ENCODE measurements at regions of chr1 and their contacts with region 1.

Region 1: DNA sequence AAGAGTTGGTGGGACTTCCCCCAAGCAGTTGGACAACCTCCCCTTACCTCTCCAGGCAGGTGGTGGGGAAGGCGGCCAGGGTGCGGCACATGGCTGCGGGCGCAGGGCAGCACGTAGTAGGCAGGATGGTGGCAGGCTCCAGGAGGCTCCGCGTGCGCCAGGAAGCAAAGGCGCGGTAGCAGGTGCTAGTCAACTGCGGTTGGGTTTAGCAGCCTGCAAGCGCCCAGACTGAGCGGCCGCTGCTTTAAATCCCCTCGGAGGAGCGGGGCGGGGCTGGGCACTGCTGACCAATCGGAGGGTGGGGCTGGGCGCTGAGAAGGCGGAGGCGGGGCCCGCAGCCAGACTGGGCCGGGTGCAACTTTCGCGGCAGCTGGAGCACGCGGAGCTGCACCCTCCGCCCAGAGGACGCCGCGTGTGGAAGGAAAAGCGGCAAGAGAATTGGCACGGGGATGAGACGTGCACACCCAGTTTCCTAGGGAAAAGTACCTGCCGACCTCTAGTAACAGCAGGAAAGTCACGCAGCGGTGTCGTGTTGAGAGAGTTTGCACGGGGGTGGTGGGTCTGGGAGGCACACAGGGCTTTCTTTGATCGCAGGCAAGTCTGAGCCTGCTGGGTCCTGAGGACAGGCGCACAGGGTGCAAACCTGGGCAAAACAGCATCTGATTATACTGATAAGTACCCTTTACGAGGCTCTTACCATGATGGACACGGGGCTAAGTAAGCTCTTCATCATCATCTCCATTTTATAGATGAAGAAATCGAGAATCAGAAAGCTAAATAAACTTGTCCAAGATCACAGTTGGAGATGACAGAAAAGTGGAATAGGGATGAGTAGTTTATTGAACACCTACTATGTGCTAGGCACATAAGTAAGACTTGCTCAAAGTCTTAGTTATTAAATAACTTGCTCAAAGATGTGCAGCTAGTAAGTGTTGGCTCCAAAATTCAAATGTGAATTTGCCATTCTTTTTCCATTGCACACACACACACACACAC is at the start of gene RGS16:
- DNase-seq: peak; percentile 95
- ATAC-seq: peak; percentile 93
- H3K4me3 Mint-ChIP-seq: no peak within 1 kb of the TSS
- H3K27ac Mint-ChIP-seq: peak within 1 kb of the TSS; percentile 74
- H3K4me1 Mint-ChIP-seq: peaks cover 27% of the 10 kb centered on the region
- H3K27me3 Mint-ChIP-seq: peaks cover 38% of the 10 kb centered on the region
- total RNA-seq, gene RGS16: 1.8 to 39.9 TPM

Region 2: DNA sequence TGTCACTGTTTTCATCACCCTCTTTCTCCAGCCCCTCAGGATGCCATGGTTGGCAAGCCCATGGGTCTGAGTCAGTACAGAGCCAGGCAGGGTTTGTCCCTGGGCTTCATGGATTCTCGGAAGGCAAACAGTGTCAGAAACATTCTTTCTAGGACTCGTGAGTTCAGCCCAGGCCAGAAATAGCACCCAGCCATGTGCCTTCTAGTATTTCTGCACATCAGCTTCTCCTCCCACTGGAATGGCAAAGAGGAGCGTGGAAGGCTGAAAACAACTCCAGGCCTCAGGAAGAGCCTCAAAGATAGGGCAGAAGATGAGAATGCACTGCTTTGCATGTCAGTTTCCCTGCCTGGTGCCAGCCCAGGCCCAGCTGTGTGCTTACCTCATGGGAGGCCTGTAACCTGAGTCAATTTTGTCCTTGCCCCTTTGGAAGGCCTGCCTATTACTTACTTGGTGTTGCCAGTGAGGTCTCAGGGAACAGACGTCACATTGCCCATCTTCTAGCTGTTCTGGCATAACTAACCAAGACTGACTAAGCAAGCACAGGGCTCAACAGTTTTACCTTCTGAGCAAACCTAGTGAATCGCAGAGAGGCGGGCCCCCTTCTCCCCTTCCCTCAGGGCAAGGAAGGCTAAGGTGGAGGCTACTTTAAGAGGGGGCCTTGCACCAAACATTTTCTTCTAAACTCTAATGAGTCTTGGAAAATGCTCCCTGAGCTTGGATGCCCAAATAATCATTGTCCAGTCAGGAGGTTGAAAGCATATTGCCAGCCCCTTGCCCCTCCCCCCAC is 255.3 kb before region 1 on chr1:
- CTCF ChIA-PET with region 1: no interaction called
- DNase-seq: no peak
- ATAC-seq: no peak
- H3K4me3 Mint-ChIP-seq: no peak overlapping the region
- H3K27ac Mint-ChIP-seq: no peak overlapping the region
- H3K4me1 Mint-ChIP-seq: no peaks in the 10 kb centered on the region
- H3K27me3 Mint-ChIP-seq: peaks cover 2% of the 10 kb centered on the region

Region 3: DNA sequence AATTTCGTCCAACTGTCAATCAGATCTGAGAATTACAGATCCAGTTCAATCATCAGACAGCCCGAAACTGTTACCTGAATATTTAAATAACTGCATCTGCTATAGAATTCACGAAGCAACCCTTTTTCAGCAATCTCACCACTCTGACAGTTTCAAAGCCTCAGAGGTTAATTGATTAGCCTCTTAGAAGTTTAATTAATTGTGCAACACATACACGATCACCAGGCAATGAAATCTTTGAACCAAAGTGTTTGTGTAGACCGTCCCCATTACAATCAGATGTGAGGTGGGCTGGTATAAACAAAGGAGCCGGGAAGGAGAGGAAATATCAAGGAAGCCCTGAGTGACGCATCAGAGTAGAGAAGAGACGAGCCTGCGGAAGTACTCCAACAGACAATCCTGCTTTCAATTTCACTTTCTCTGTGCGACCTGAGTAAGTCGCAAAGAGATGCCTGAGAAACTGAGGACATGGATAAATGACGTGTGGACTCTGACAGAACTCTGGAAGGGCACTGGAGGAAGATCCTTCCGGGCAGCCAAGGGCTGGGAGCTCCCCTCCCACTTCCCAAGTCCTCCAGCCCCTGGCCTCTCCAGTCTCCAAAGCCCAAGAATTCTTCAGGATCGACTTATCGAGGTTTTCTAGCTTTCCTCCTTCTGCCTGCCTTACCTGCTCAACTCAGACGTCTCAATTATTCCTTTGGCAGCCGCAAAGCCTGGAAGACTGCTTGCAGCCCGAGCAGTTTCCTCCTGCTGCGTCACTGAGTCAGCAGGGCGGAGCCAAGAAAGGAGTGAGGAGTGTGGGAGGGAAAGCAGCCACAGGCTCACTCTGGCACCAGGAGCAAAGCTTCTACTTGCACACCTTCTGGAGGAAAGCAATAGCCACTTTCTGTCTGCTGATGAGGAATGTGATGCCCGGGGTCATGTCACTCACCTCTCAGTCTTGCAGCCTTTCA is 15.7 kb before region 1 on chr1 and contains the start of gene RNASEL:
- CTCF ChIA-PET with region 1: interaction called, 98 read pairs
- DNase-seq: peak; percentile 68
- ATAC-seq: peak; percentile 96
- H3K4me3 Mint-ChIP-seq: peak within 1 kb of the TSS; percentile 89
- H3K27ac Mint-ChIP-seq: peak within 1 kb of the TSS; percentile 99
- H3K4me1 Mint-ChIP-seq: peaks cover 26% of the 10 kb centered on the region
- H3K27me3 Mint-ChIP-seq: peaks cover 14% of the 10 kb centered on the region
- total RNA-seq, gene RNASEL: 6.5 to 10.0 TPM

Region 4: GRCh38 chr1:182614796-182615454 is 10.5 kb after region 1 on chr1:
- CTCF ChIA-PET with region 1: interaction called, 148 read pairs
- DNase-seq: peak; percentile 65
- ATAC-seq: peak; percentile 38
- H3K4me3 Mint-ChIP-seq: peak overlapping the region; percentile 57
- H3K27ac Mint-ChIP-seq: peak overlapping the region; percentile 44
- H3K4me1 Mint-ChIP-seq: peaks cover 47% of the 10 kb centered on the region
- H3K27me3 Mint-ChIP-seq: peaks cover 80% of the 10 kb centered on the region

Region 5: GRCh38 chr1:182771187-182771984 is 166.9 kb after region 1 on chr1:
- CTCF ChIA-PET with region 1: interaction called, 10 read pairs
- DNase-seq: no peak
- ATAC-seq: no peak
- H3K4me3 Mint-ChIP-seq: no peak overlapping the region
- H3K27ac Mint-ChIP-seq: no peak overlapping the region
- H3K4me1 Mint-ChIP-seq: no peaks in the 10 kb centered on the region
- H3K27me3 Mint-ChIP-seq: peaks cover 44% of the 10 kb centered on the region

Region 6: GRCh38 chr1:182789138-182790076 is 184.9 kb after region 1 on chr1 and contains the start of gene NPL:
- CTCF ChIA-PET with region 1: interaction called, 715 read pairs
- DNase-seq: peak; percentile 89
- ATAC-seq: peak; percentile 95
- H3K4me3 Mint-ChIP-seq: peak within 1 kb of the TSS; percentile 82
- H3K27ac Mint-ChIP-seq: peak within 1 kb of the TSS; percentile 57
- H3K4me1 Mint-ChIP-seq: peaks cover 15% of the 10 kb centered on the region
- H3K27me3 Mint-ChIP-seq: peaks cover 31% of the 10 kb centered on the region
- total RNA-seq, gene NPL: 1.8 to 10.1 TPM